Right lobe of liver (tissue), 6 donors: ENCODE measurements at regions of chr10 and their contacts with region 1.

Region 1: GRCh38 chr10:110141871-110142635 is 65.4 kb upstream of the MXI1 start:
- DNase-seq: peak; percentile 75 to 90 (median 88)
- ATAC-seq: peak; percentile 72 to 88 (median 86)
- H3K4me3 ChIP-seq: no peak overlapping the region
- H3K27ac ChIP-seq: peak overlapping the region in 2 of 3 donors; percentile 53 to 65
- H3K4me1 ChIP-seq: peaks cover 0 to 32% (median 5%) of the 10 kb centered on the region in 4 donors
- H3K27me3 ChIP-seq: no peaks in the 10 kb centered on the region
- CTCF ChIP-seq: no peak
- POLR2A ChIP-seq: no peak

Region 2: DNA sequence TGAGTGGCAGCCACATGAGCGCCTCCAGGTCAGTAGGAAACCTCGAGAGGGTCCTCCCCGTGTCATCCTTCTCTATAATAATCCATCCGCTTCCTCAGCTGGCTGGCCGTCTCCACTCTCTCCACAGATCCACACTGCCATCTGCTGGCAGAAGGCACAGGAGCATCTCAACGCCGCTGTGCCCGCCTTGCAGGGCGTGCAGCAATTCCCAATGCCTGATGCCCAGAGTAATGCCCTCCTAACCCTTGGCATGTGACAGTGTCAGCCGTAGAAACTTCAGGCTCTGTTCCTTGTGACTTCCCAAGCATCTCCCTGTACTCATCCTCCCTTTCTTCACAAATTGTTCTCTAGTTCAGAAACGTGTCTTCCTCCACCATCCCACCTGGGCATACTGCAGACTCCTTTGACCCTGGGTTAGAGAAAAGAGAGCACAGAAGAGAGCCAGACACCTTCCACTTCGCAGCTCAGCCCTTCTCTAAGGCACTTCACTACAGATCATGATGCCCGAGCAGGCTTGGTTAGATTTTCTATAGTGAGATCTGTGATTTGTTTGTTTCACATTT is 289.5 kb before region 1 on chr10:
- intact Hi-C with region 1: no loop called
- DNase-seq: peak; percentile 79 to 81 (median 80)
- ATAC-seq: peak; percentile 96 to 99 (median 97)
- H3K4me3 ChIP-seq: no peak overlapping the region
- H3K27ac ChIP-seq: no peak overlapping the region
- H3K4me1 ChIP-seq: no peaks in the 10 kb centered on the region
- H3K27me3 ChIP-seq: no peaks in the 10 kb centered on the region
- CTCF ChIP-seq: peak; percentile 64 to 96 (median 94)
- POLR2A ChIP-seq: no peak

Region 3: DNA sequence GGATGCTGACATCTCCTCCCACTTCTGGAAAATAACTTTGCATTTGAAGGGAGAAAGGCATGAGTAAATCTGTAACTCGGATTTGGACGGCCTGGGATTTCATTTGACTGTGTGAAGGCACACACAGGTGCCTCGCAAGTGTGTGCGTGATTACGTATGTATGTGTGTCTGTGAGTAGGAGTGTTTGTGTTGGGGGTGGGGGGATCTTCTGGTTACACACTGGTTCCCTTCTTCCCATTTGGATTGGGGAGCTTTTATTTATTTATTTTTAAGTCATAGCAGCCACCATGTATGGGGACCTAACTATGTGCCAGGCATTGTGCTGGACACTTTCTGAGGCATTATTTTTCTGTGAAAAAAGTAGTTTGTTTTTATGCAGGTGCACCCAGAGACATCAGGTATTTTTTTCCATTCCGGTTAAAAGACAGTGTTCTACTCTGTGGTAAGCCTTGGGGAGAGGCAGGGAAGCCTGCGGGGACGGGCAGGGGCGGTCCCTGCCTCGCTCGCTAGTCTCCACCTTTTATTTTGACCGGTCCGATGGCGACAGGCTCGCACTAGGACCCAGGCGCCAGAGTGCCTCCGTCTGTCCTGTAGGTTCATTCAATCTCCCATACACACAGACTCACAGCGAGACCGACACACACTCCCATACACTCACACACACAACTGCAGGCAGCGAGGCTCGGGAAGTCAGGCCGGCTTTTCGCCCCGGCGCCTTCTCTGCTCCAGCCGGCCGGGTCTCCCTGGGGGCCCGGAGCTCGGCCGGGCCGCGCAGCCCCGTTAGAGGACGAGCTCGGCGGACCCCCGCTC is 65.1 kb after region 1 on chr10 and contains the start of gene MXI1:
- intact Hi-C with region 1: loop called in 1 of 2 experiments (anchors 10 kb)
- DNase-seq: peak; percentile 83 to 86 (median 85)
- ATAC-seq: peak; percentile 36 to 58 (median 48)
- H3K4me3 ChIP-seq: peak within 1 kb of the TSS; percentile 61 to 75 (median 67)
- H3K27ac ChIP-seq: peak within 1 kb of the TSS; percentile 45 to 89 (median 63)
- H3K4me1 ChIP-seq: peaks cover 0 to 33% (median 0%) of the 10 kb centered on the region in 4 donors
- H3K27me3 ChIP-seq: no peaks in the 10 kb centered on the region
- CTCF ChIP-seq: no peak
- POLR2A ChIP-seq: peak; percentile 48
- total RNA-seq, gene MXI1: 17.1 to 32.6 (median 26.5) TPM

Region 4: DNA sequence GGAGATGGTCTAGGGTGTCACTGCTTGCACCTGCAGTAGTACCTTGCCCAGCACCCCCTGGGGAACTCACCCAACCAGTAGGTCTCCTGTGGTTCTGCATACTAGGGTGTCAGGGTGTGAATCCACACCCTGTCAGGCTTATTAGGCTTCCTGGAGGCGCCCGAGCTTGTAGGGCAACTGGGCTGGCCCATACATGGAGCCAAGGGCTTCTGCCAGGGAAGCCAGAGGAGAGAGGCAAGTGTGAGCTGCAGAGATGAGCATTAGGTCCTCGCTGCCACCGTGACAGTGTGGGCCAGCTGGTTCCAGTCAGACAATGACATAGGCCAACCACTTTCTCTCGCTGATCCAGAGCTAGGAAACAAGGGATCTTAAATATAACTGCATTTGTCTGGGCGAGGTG is 76.6 kb after region 1 on chr10:
- intact Hi-C with region 1: loop called in 1 of 2 experiments (anchors 5 kb)
- DNase-seq: no peak
- ATAC-seq: no peak
- H3K4me3 ChIP-seq: no peak overlapping the region
- H3K27ac ChIP-seq: no peak overlapping the region
- H3K4me1 ChIP-seq: peaks cover 0 to 2% (median 0%) of the 10 kb centered on the region in 4 donors
- H3K27me3 ChIP-seq: no peaks in the 10 kb centered on the region
- CTCF ChIP-seq: no peak
- POLR2A ChIP-seq: no peak

Region 5: DNA sequence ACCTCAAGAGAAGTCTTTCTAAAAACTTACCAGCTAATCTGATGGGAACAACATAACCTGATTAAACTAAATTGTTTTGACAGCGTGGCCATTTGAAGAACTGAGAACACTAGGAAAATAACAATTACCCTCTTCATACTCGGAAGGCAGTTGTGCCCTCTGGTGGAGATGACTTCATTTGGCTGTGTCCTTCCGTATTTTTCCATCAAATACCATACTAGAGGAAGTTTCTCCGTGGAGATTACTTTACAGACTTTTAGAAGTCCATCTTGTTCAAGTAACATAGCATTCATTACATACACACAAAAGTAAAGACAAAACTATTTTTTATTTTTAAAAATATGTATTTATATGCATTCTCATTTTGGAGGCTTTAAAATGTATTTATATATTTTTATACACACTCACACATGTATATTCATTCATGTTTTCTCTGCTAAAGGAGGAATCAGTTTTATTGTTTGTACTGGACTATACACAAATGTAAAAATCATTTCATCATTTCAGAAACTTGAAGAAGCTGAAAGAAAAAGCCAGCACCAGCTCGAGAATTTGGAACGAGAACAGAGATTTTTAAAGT is 137.4 kb after region 1 on chr10:
- intact Hi-C with region 1: loop called in 1 of 2 experiments (anchors 10 kb)
- DNase-seq: peak in 1 of 3 donors; percentile 52
- ATAC-seq: peak; percentile 96 to 98 (median 97)
- H3K4me3 ChIP-seq: peak overlapping the region in 2 of 3 donors; percentile 13 to 33
- H3K27ac ChIP-seq: peak overlapping the region in 2 of 3 donors; percentile 47 to 50
- H3K4me1 ChIP-seq: no peaks in the 10 kb centered on the region
- H3K27me3 ChIP-seq: no peaks in the 10 kb centered on the region
- CTCF ChIP-seq: peak; percentile 75 to 94 (median 82)
- POLR2A ChIP-seq: no peak